Calu3 (cell line): ENCODE measurements at regions of chr1 and their contacts with region 1.

Region 1: DNA sequence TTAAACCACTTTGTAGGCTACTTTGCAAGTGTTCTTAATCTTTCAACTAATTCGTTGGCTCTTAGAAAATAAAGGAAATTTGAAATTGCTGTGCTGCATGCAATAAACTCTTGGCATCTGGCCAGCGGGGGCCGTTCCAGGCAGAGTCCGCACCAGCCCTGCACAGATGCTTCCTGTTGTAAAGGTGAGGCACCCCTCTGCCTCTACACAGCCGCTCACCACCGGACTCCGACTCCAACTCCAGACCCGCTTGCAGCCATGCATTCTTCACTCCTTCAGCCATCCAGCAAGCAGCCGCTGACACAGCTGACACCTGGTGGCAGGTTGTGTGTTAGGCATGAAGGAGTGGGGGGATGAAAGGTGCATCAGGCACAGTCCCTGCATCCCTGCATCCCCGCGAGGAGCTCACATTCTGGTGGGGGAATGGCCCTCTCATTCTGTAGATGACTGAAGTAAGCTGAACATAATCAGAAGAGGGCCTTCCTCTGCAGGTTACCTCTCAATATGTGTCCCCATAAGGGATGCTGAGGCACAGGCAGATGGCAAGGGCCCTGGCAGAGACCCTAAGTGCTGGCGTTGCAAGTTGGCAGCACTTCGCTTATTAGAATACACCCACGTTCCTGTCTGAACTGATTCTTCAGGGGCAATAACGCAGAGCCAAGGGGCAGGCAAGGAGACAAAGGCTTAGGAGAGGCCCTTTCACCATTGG is 56.8 kb downstream of the GLIS1 start:
- DNase-seq: peak; percentile 71
- H3K4me3 Mint-ChIP-seq: no peak overlapping the region
- H3K27ac Mint-ChIP-seq: no peak overlapping the region
- H3K4me1 Mint-ChIP-seq: peaks cover 34% of the 10 kb centered on the region
- H3K27me3 Mint-ChIP-seq: peaks cover 100% of the 10 kb centered on the region
- CTCF ChIP-seq: peak; percentile 68

Region 2: GRCh38 chr1:53485478-53486394 is 196.4 kb before region 1 on chr1:
- CTCF ChIA-PET with region 1: interaction called, 8 read pairs
- intact Hi-C with region 1: loop called (anchors 2 kb)
- DNase-seq: peak; percentile 85
- H3K4me3 Mint-ChIP-seq: no peak overlapping the region
- H3K27ac Mint-ChIP-seq: no peak overlapping the region
- H3K4me1 Mint-ChIP-seq: peaks cover 9% of the 10 kb centered on the region
- H3K27me3 Mint-ChIP-seq: peaks cover 100% of the 10 kb centered on the region
- CTCF ChIP-seq: peak; percentile 89

Region 3: DNA sequence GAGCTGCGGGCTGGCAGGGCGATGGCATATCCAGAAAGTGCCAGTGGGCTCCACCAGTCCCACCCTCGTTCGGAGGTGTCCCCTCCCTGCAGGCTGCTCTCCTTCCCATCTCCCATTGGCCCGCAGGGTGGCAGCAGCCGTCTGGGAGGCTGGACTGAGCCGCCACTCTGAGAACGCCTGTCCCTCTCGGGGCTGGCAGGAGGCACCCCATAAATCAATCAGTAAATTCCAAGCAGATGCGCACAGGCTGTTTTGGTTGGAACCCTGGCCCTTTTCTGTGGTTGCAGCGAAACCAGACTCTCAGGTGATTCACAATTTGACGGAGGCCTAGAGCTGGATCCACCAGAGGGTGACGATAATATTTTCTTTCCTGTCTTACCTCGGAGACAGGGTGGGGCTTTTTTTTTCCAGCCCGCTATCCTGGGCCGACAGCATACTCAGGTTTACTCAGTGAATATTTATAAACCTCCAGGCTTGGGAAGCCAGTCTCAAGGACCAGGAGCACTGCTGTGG is 42.8 kb before region 1 on chr1:
- CTCF ChIA-PET with region 1: no interaction called
- intact Hi-C with region 1: loop called (anchors 1 kb)
- DNase-seq: peak; percentile 34
- H3K4me3 Mint-ChIP-seq: no peak overlapping the region
- H3K27ac Mint-ChIP-seq: no peak overlapping the region
- H3K4me1 Mint-ChIP-seq: no peaks in the 10 kb centered on the region
- H3K27me3 Mint-ChIP-seq: peaks cover 81% of the 10 kb centered on the region
- CTCF ChIP-seq: no peak

Region 4: DNA sequence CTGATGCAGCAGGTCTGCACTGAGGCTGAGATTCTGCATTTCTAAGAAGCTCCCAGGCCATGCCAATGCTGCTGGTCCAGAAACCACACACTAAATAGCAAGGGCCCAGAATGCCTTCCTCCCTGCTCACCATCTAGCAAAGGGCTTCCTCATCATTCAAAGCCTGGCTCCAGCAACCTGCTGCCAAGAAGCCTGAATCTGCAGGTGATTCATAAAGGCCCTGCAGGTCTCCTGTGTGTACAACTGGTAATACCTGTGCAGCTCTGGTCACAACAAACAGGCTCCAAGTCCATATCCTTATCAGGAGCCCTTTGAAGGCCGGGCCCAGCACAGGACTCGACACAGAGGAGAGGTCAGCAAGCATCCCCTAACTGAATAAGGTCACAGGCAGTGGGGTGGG is 30.1 kb after region 1 on chr1:
- CTCF ChIA-PET with region 1: no interaction called
- intact Hi-C with region 1: no loop called
- DNase-seq: no peak
- H3K4me3 Mint-ChIP-seq: no peak overlapping the region
- H3K27ac Mint-ChIP-seq: no peak overlapping the region
- H3K4me1 Mint-ChIP-seq: no peaks in the 10 kb centered on the region
- H3K27me3 Mint-ChIP-seq: peaks cover 63% of the 10 kb centered on the region
- CTCF ChIP-seq: no peak